Sigmoid colon (tissue), 7 donors: ENCODE measurements at regions of chr16 and their contacts with region 1.

Region 1: DNA sequence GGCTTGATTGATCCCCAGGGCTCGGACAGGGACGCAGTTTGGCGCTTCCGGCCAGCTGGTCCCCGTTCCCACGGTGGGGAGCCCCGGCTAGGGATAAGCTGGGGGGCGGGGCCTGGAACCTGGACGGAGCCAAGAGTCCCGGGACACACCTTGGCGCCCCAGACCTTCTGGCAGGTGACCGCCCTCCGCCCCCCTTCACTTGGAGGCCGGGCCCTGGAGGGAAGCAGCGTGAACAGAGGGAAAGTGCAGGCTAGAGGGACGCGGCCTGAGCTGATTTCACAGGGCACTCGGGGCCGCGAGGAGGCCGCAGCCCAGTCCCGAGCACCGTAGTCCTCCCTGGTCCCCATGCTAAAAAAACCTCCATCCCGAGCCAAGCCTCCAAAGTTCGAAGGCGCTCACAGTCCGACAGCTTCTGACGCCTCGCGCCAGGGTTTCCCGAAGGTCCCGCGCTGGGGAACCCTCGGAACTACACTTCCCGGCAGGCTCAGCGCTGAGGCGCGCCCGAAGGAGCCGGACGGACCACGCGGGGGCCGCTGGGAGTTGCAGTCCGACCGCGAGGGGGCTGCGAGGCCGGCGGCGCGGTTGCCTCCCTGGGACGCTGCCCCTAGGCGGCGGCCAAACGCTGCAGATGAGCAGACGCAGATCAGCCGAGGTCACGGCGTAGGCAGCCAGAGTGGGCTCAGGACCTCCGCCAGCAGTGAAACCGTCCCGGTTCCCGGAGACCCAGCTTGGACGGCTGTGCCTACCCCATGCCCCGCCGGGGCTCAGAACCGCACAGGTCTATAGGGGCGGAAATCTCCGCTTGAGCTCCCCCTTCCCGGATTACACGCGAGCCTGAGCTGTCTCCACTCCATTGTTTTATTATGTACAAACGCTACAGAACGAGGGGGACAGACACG is at the start of gene TBX6:
- DNase-seq: peak; percentile 96
- H3K4me3 ChIP-seq: peak within 1 kb of the TSS; percentile 35 to 65 (median 50)
- H3K27ac ChIP-seq: peak within 1 kb of the TSS; percentile 81 to 97 (median 87)
- H3K4me1 ChIP-seq: peaks cover 0 to 51% (median 46%) of the 10 kb centered on the region in 4 donors
- H3K27me3 ChIP-seq: no peaks in the 10 kb centered on the region
- CTCF ChIP-seq: peak; percentile 76 to 92 (median 85)
- EP300 ChIP-seq: no peak
- POLR2A ChIP-seq: no peak
- total RNA-seq, gene TBX6: 0.54 to 1.7 (median 1.1) TPM

Region 2: GRCh38 chr16:29815793-29816693 is 275.7 kb before region 1 on chr16 and contains the start of gene PAGR1:
- intact Hi-C with region 1: loop called (anchors 10 kb)
- DNase-seq: peak; percentile 100
- H3K4me3 ChIP-seq: peak within 1 kb of the TSS; percentile 58 to 78 (median 66)
- H3K27ac ChIP-seq: peak within 1 kb of the TSS; percentile 94 to 97 (median 95)
- H3K4me1 ChIP-seq: peaks cover 0 to 79% (median 66%) of the 10 kb centered on the region in 4 donors
- H3K27me3 ChIP-seq: no peaks in the 10 kb centered on the region
- CTCF ChIP-seq: peak; percentile 68 to 88 (median 82)
- EP300 ChIP-seq: peak in 1 of 4 donors; percentile 35
- POLR2A ChIP-seq: peak; percentile 24 to 59
- total RNA-seq, gene PAGR1: 18.5 to 29.9 (median 25.7) TPM

Region 3: GRCh38 chr16:30052671-30053372 is 38.9 kb before region 1 on chr16:
- intact Hi-C with region 1: loop called (anchors 5 kb)
- DNase-seq: peak; percentile 97
- H3K4me3 ChIP-seq: peak overlapping the region; percentile 53 to 80 (median 66)
- H3K27ac ChIP-seq: peak overlapping the region; percentile 25 to 53 (median 44)
- H3K4me1 ChIP-seq: peaks cover 0 to 17% (median 13%) of the 10 kb centered on the region in 4 donors
- H3K27me3 ChIP-seq: no peaks in the 10 kb centered on the region
- CTCF ChIP-seq: no peak
- EP300 ChIP-seq: no peak
- POLR2A ChIP-seq: no peak

Region 4: GRCh38 chr16:30122604-30123160 is 31.0 kb after region 1 on chr16:
- intact Hi-C with region 1: loop called (anchors 2 kb)
- DNase-seq: no peak
- H3K4me3 ChIP-seq: peak overlapping the region; percentile 97 to 99 (median 99)
- H3K27ac ChIP-seq: peak overlapping the region; percentile 93 to 98 (median 96)
- H3K4me1 ChIP-seq: peaks cover 0 to 38% (median 34%) of the 10 kb centered on the region in 4 donors
- H3K27me3 ChIP-seq: no peaks in the 10 kb centered on the region
- CTCF ChIP-seq: no peak
- EP300 ChIP-seq: no peak
- POLR2A ChIP-seq: no peak

Region 5: DNA sequence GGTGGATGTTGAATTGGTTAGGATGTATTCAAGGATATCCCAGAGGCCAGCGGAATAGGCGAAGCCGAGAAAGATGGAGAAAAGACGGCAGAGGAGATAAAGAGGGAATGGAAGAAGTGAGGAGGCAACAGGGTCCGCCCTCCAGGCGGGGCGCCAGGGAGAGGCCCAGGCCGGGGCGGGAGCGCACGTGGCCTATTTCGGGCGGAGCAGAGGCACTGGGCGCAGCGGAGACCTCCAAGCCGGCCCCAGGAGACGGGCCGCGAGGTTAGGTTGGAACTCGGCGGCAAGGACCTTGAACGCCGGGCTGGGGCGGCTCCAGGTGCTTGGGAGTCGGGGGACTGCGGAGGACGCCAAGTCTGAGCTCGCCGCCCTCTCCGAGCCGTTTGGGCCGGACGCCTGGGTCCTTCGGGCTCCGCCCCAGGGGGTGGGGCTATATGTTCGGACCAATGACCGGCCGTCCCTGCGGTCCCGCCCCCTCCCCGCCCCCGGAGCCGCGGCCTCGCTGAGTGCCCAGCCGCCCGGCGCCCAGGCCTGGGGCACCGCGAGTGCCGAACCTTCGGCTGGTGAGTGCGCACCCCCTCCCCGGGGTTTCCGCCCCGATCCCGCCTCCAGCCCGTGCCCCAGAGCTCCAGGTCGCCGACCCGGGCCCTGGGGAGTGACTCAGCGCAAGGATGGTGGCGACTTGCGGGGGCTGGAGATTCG is 315.5 kb after region 1 on chr16 and contains the start of gene ZNF771:
- intact Hi-C with region 1: loop called (anchors 5 kb)
- DNase-seq: peak; percentile 96
- H3K4me3 ChIP-seq: peak within 1 kb of the TSS; percentile 57 to 88 (median 65)
- H3K27ac ChIP-seq: peak within 1 kb of the TSS; percentile 81 to 97 (median 90)
- H3K4me1 ChIP-seq: peaks cover 0 to 29% (median 26%) of the 10 kb centered on the region in 4 donors
- H3K27me3 ChIP-seq: no peaks in the 10 kb centered on the region
- CTCF ChIP-seq: no peak
- EP300 ChIP-seq: no peak
- POLR2A ChIP-seq: peak; percentile 40 to 63
- total RNA-seq, gene ZNF771: 17.4 to 30.7 (median 20.3) TPM

Region 6: DNA sequence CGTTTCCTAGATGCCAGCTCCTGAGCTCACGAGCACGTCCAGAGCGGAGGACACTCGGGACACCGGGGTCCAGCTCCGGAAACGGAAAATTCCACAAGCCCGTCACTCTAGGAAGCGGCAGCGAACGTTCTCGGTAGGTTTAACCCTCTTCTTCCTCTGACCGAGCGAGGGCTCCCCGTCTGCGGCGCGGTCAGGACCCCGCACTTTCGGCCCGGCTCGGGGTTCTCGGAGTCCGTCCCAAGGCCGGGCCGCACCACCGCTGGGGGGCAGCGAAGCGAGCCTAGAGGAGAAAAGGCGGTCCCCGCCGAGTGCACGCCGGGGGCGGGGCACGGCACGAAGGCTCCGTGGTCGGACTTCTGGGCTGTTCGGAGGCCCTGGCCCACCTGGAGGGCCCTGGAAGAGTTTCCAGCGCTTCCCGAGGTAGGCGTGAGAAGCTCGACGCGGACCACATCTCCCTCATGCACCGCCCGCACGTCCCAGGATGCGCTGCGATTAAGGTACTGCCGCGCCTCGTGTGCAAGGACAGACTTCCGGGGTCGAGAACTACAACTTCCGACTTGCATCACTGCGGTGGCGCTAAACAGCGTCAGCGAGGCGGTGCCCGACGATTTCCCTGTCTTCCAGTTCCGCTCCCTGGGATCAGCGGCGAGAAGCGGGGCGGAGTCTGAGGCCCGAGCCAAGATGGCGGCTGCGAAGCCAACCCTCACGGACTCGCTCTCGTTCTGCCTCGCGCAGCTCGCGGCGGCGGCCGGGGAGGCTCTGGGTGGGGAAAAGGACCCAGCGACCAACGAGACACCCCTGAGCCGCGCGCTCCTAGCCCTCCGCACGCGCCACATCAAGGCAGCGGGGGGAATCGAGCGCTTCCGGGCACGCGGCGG is 1367.4 kb after region 1 on chr16 and contains the start of gene ARMC5:
- intact Hi-C with region 1: loop called (anchors 10 kb)
- DNase-seq: peak; percentile 99
- H3K4me3 ChIP-seq: peak within 1 kb of the TSS; percentile 68 to 92 (median 76)
- H3K27ac ChIP-seq: peak within 1 kb of the TSS; percentile 97 to 100 (median 100)
- H3K4me1 ChIP-seq: peaks cover 0 to 52% (median 48%) of the 10 kb centered on the region in 4 donors
- H3K27me3 ChIP-seq: no peaks in the 10 kb centered on the region
- CTCF ChIP-seq: peak; percentile 33 to 60 (median 48)
- EP300 ChIP-seq: no peak
- POLR2A ChIP-seq: peak in 1 of 2 donors; percentile 52
- total RNA-seq, gene ARMC5: 3.9 to 9.5 (median 6.6) TPM